ENCODE measurements at regions of chr17 and their contacts with region 1.

Region 1: GRCh38 chr17:5055543-5055942 is 20.3 kb upstream of the SLC52A1 start:
- DNase-seq: no peak
- H3K4me3 ChIP-seq: no peak overlapping the region
- H3K27ac ChIP-seq: no peak overlapping the region
- H3K4me1 ChIP-seq: no peaks in the 10 kb centered on the region
- H3K27me3 ChIP-seq: no peaks in the 10 kb centered on the region
- CTCF ChIP-seq: no peak
- POLR2A ChIP-seq: no peak

Region 2: GRCh38 chr17:4554997-4555799 is 500.3 kb before region 1 on chr17 and contains the start of gene MYBBP1A:
- CTCF ChIA-PET with region 1: no interaction called
- POLR2A ChIA-PET with region 1: no interaction called
- dilution Hi-C with region 1: no loop called
- intact Hi-C with region 1: no loop called
- DNase-seq: peak; percentile 94
- H3K4me3 ChIP-seq: peak within 1 kb of the TSS; percentile 77 to 84 (median 78)
- H3K27ac ChIP-seq: peak within 1 kb of the TSS; percentile 57
- H3K4me1 ChIP-seq: peaks cover 17% of the 10 kb centered on the region
- H3K27me3 ChIP-seq: no peaks in the 10 kb centered on the region
- CTCF ChIP-seq: peak in 1 of 2 donors; percentile 22
- POLR2A ChIP-seq: peak; percentile 86
- total RNA-seq, gene MYBBP1A: 78.1 and 79.2 TPM in 2 replicates

Region 3: DNA sequence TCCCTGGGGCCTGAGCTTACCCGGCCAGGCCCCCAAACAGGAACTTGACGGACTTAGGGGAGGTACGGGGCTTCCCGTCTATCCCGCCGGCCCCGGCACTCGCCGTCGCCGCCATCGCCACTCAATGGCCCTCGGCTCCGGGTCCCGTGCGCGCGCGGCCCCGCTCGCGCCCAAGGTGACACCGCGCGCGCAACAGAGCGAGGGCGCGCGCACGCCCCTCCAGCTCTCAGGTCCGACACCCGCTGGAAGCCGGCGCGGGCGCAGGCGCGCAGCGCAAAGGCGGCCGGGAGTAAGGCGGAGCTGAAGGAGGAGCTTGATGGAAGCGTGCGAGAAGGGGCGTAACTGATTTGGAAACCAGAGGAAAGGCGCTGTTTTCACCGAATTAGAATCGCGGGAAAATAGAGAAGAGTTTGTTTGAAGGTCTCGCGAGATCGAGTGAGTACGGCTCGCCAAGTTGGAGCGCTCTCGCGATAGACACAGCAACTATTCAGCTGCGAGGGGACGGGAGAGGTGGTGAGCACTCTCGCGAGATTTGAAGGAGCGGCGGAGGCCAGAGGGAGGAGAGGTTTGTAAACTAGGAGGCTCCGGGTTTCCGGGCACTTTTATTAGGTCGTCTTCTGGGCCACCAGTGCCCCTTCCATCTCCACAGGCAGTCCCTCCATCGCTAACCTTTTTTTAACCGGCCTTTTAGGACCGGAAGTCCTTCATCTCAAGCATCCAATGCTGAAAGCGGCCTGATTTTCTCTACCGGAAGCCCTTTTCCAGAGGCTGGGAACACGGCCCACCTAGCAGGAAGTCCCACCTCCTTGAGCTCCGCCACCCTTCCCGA is 115.5 kb before region 1 on chr17 and contains the starts of genes RNF167 and SLC25A11:
- CTCF ChIA-PET with region 1: no interaction called
- POLR2A ChIA-PET with region 1: no interaction called
- dilution Hi-C with region 1: no loop called
- intact Hi-C with region 1: no loop called
- DNase-seq: peak; percentile 100
- H3K4me3 ChIP-seq: peak within 1 kb of the TSS; percentile 45 to 84 (median 77)
- H3K27ac ChIP-seq: peak within 1 kb of the TSS; percentile 81
- H3K4me1 ChIP-seq: peaks cover 21% of the 10 kb centered on the region
- H3K27me3 ChIP-seq: no peaks in the 10 kb centered on the region
- CTCF ChIP-seq: no peak
- POLR2A ChIP-seq: peak; percentile 85
- total RNA-seq, gene RNF167: 60.2 and 61.0 TPM in 2 replicates
- total RNA-seq, gene SLC25A11: 50.2 and 58.2 TPM in 2 replicates

Region 4: GRCh38 chr17:5031365-5032082 is 24.0 kb before region 1 on chr17:
- CTCF ChIA-PET with region 1: interaction called, 72 read pairs
- POLR2A ChIA-PET with region 1: no interaction called
- dilution Hi-C with region 1: no loop called
- intact Hi-C with region 1: no loop called
- DNase-seq: peak; percentile 73
- H3K4me3 ChIP-seq: peak overlapping the region in 2 of 3 experiments; percentile 24 to 66
- H3K27ac ChIP-seq: peak overlapping the region; percentile 26
- H3K4me1 ChIP-seq: peaks cover 5% of the 10 kb centered on the region
- H3K27me3 ChIP-seq: peaks cover 2% of the 10 kb centered on the region in 2 experiments
- CTCF ChIP-seq: peak; percentile 50 to 81
- POLR2A ChIP-seq: no peak

Measured in endothelial cell of umbilical vein (primary cell).